GM12878 (cell line): ENCODE measurements at regions of chr11 and their contacts with region 1.

Region 1: GRCh38 chr11:76721755-76722677 is 51.5 kb upstream of the LRRC32 start:
- DNase-seq: no peak
- ATAC-seq: peak; percentile 98
- H3K4me3 ChIP-seq: no peak overlapping the region
- H3K27ac ChIP-seq: no peak overlapping the region
- H3K4me1 ChIP-seq: no peaks in the 10 kb centered on the region
- H3K27me3 ChIP-seq: peaks cover 0 to 4% of the 10 kb centered on the region in 2 experiments; a peak in 2 of 4 replicates
- CTCF ChIP-seq: peak; percentile 86 to 94 (median 87)
- EP300 ChIP-seq: no peak
- POLR2A ChIP-seq: no peak
- RAD21 ChIP-seq: peak; percentile 58

Region 2: GRCh38 chr11:76799066-76799804 is 77.2 kb after region 1 on chr11:
- CTCF ChIA-PET with region 1: interaction called, 11 read pairs
- POLR2A ChIA-PET with region 1: interaction called, 4 read pairs
- RAD21 ChIA-PET with region 1: interaction called, 6 read pairs
- SMC1A ChIA-PET with region 1: interaction called, 3 read pairs
- in situ Hi-C with region 1: no loop called
- intact Hi-C with region 1: no loop called
- DNase-seq: no peak
- ATAC-seq: peak; percentile 99
- H3K4me3 ChIP-seq: no peak overlapping the region
- H3K27ac ChIP-seq: no peak overlapping the region
- H3K4me1 ChIP-seq: no peaks in the 10 kb centered on the region
- H3K27me3 ChIP-seq: no peaks in the 10 kb centered on the region
- CTCF ChIP-seq: peak; percentile 78 to 91 (median 89)
- EP300 ChIP-seq: no peak
- POLR2A ChIP-seq: no peak
- RAD21 ChIP-seq: peak; percentile 74